Tibial artery (tissue), 4 donors: ENCODE measurements at regions of chr15 and their contacts with region 1.

Region 1: GRCh38 chr15:42050484-42051255 is 29.8 kb upstream of the PLA2G4E start:
- DNase-seq: no peak
- H3K4me3 ChIP-seq: no peak overlapping the region
- H3K27ac ChIP-seq: no peak overlapping the region
- H3K4me1 ChIP-seq: no peaks in the 10 kb centered on the region
- H3K27me3 ChIP-seq: peaks cover 0 to 4% of the 10 kb centered on the region in 2 donors
- CTCF ChIP-seq: no peak

Region 2: GRCh38 chr15:41999290-42000285 is 51.1 kb before region 1 on chr15:
- intact Hi-C with region 1: loop called (anchors 5 kb)
- DNase-seq: no peak
- H3K4me3 ChIP-seq: no peak overlapping the region
- H3K27ac ChIP-seq: no peak overlapping the region
- H3K4me1 ChIP-seq: no peaks in the 10 kb centered on the region
- H3K27me3 ChIP-seq: no peaks in the 10 kb centered on the region
- CTCF ChIP-seq: no peak